PC-9 (cell line): ENCODE measurements at regions of chr16 and their contacts with region 1.

Region 1: GRCh38 chr16:47460711-47461597 is at the starts of genes ITFG1 and PHKB:
- DNase-seq: peak; percentile 80 to 91
- H3K4me3 ChIP-seq: peak within 1 kb of the TSS; percentile 75
- H3K27ac ChIP-seq: peak within 1 kb of the TSS; percentile 94
- H3K4me1 ChIP-seq: peaks cover 27% of the 10 kb centered on the region
- H3K27me3 ChIP-seq: no peaks in the 10 kb centered on the region
- CTCF ChIP-seq: no peak
- total RNA-seq, gene ITFG1: 27.7 and 33.0 TPM in 2 replicates
- total RNA-seq, gene PHKB: 65.5 and 81.3 TPM in 2 replicates

Region 2: GRCh38 chr16:47141773-47142485 is 319.0 kb before region 1 on chr16:
- CTCF ChIA-PET with region 1: no interaction called
- POLR2A ChIA-PET with region 1: no interaction called
- intact Hi-C with region 1: loop called (anchors 5 kb)
- DNase-seq: peak; percentile 83 to 86
- H3K4me3 ChIP-seq: peak overlapping the region; percentile 75
- H3K27ac ChIP-seq: peak overlapping the region; percentile 17; the same call in 1 of the 2 replicates
- H3K4me1 ChIP-seq: peaks cover 25% of the 10 kb centered on the region
- H3K27me3 ChIP-seq: no peaks in the 10 kb centered on the region
- CTCF ChIP-seq: peak; percentile 90

Region 3: DNA sequence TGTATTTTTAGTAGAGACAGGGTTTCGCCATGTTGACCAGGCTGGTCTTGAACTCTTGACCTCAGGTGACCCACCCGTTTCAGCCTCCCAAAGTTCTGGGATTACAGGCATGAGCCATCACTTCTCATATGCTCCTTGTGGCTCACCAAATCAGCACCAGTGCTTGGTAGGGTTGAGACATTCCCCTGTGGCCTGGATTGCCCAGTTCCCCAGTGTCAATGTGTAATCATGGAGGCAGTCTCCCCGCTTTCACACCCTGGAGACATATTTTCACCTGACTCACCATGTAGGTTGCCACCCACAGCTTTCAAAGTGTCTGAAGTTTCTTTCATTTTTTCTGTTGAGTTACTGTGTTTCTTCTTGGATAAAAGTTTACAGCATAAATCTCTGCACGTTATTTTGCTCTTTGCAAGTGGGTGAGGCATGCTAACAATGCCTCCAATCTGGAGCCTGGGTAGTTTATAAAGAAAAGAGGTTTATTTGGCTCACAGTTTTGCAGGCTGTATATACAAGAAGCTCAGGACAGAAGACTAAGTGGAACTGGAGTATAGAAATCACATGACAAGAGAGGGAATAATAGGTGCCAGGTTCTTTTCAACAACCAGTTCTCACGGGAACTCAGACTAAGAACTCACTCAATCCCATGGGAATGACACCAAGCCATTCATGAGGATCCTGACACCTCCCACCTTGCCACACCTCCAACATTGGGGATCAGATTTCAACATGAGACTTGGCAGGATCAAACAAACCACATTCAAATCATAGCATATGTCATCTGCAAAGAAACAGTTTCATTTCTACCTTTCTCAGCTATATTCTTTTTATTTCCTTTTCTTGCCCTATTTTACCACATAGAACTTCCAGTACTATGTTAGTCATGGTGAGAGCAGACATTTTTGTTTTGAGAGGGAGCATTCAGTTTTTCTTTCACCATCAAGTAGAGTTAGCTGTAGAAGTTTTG is 113.4 kb after region 1 on chr16:
- CTCF ChIA-PET with region 1: no interaction called
- POLR2A ChIA-PET with region 1: no interaction called
- intact Hi-C with region 1: loop called (anchors 5 kb)
- DNase-seq: peak; percentile 55 to 81
- H3K4me3 ChIP-seq: no peak overlapping the region
- H3K27ac ChIP-seq: peak overlapping the region; percentile 89
- H3K4me1 ChIP-seq: peaks cover 21% of the 10 kb centered on the region
- H3K27me3 ChIP-seq: no peaks in the 10 kb centered on the region
- CTCF ChIP-seq: no peak

Region 4: DNA sequence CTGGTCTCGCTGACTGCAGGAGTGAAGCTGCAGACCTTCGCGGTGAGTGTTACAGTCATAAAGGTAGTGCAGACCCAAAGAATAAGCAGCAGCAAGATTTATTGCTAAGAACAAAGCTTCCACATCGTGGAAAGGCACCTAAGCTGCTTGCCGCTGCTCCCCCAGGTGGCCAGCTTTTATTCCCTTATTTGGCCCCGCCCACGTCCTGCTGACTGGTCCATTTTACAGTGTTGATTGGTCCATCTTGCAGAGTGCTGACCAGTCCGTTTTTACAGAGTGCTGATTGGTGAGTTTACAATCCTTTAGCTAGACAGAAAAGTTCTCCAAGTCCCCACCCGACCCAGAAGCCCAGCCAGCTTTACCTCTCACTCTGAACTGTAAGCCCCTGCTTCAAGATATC is 467.1 kb after region 1 on chr16:
- CTCF ChIA-PET with region 1: no interaction called
- POLR2A ChIA-PET with region 1: no interaction called
- intact Hi-C with region 1: loop called (anchors 5 kb)
- DNase-seq: no peak
- H3K4me3 ChIP-seq: no peak overlapping the region
- H3K27ac ChIP-seq: no peak overlapping the region
- H3K4me1 ChIP-seq: peaks cover 23% of the 10 kb centered on the region
- H3K27me3 ChIP-seq: no peaks in the 10 kb centered on the region
- CTCF ChIP-seq: no peak

Region 5: GRCh38 chr16:48609652-48610029 is 1148.7 kb after region 1 on chr16:
- CTCF ChIA-PET with region 1: no interaction called
- POLR2A ChIA-PET with region 1: interaction called, 19 read pairs
- intact Hi-C with region 1: no loop called
- DNase-seq: no peak
- H3K4me3 ChIP-seq: peak overlapping the region; percentile 74
- H3K27ac ChIP-seq: peak overlapping the region; percentile 99
- H3K4me1 ChIP-seq: peaks cover 45% of the 10 kb centered on the region
- H3K27me3 ChIP-seq: no peaks in the 10 kb centered on the region
- CTCF ChIP-seq: no peak